ENCODE measurements at regions of chr10 and their contacts with region 1.

Region 1: DNA sequence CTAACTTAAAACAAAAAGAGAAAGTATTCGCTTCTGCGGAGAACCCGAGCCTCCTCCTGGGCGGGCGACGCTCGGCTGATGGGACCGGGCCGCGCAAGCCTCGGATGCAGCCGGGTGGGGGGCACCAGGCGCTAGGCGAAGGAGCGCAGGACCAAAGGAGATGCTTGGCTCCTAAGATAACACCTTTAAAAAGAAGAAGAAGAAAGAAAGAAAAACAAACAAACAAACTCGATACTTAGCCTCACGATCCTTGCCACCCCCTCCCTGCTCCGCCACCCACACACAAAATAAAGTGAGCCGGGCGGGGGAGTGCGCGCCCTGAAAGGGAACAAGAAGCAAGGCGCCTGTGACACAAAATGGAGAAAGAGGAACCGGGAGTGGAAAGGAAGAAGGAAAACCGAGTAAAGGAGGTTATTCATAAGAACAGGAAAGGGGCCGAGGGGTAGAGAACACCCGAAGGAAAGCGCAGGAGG is 34.0 kb upstream of the EBLN1 start:
- DNase-seq: peak; percentile 28 to 68 (median 64)
- H3K4me3 ChIP-seq: peak overlapping the region; percentile 56 to 96 (median 81)
- H3K27ac ChIP-seq: peak overlapping the region; percentile 97 to 100 (median 99)
- H3K27me3 ChIP-seq: no peaks in the 10 kb centered on the region
- CTCF ChIP-seq: peak in 1 of 56 donors; percentile 11

Region 2: DNA sequence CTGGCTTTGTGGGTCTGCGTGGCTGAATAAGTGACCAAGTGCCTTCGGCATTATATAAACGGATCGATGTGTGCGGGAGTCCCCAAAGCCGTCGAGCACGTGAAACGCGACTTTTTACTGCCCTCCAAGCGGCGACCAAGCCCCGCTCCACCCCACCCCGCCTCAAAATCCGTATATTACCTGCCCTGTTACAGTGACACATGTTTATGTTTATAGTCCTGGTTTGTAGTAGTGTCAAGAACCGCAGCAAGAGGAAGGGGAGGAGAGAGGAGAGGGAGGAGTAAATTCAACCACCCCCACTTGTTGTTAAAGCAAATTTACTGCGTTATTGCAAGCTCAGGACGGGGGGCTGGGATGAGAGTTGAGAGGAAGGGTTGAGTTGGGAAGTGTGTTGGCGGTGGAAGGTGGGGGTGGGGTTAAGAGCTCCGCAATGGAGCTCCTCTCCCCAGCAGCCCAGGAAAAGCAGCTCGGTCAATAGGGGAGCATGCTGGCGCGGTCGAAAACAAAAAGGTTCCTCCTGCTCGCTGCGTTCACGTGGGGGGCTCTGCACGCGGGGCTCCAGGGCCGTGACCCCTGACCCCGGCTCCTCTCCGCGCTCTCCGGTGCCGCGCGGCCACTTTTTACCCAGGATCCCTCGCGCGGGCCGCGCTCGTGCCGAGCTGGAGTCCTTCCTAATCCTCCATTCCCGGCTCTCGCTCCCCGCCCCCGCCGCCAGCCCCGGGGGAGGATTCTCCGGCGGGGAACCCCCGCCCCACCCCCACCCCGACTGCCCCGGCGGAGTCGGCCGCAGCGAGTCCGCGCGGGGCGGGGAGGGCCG is 726.2 kb before region 1 on chr10 and contains the start of gene SKIDA1:
- intact Hi-C with region 1: loop called in 1 of 2 experiments (anchors 2 kb)
- DNase-seq: peak in 9 of 10 donors; percentile 53 to 86 (median 70)
- H3K4me3 ChIP-seq: peak within 1 kb of the TSS; percentile 53 to 89 (median 77)
- H3K27ac ChIP-seq: peak within 1 kb of the TSS; percentile 90 to 100 (median 99)
- H3K27me3 ChIP-seq: no peaks in the 10 kb centered on the region
- CTCF ChIP-seq: peak in 11 of 56 donors; percentile 2 to 32 (median 14)
- total RNA-seq, gene SKIDA1: 2.0 to 8.9 (median 4.4) TPM

Region 3: DNA sequence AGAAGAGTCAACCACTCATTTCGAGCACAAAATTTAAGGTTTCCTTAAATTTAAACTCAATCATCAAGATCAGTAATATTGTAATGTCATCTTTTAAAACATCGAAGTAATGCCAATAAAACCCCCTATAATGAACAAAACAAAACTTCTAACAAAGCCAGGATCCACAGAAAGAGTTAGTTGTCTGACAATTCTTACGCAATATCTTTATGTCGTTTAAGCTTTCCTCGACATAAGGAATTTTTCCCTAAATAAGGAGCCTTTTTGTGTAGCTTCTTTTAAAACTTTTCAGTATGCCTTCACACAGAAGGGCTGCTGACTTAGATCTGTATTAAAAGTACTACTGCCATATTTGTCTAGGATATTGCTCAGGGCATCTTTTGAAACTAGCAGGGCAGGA is 41.5 kb before region 1 on chr10:
- intact Hi-C with region 1: no loop called
- DNase-seq: no peak
- H3K4me3 ChIP-seq: no peak overlapping the region
- H3K27ac ChIP-seq: no peak overlapping the region
- H3K27me3 ChIP-seq: peaks cover 0 to 4% (median 0%) of the 10 kb centered on the region in 45 donors
- CTCF ChIP-seq: no peak

Region 4: GRCh38 chr10:22228943-22229801 is 22.6 kb before region 1 on chr10:
- intact Hi-C with region 1: loop called (anchors 1 kb)
- DNase-seq: peak; percentile 76 to 91 (median 84)
- H3K4me3 ChIP-seq: peak overlapping the region; percentile 55 to 93 (median 78)
- H3K27ac ChIP-seq: peak overlapping the region; percentile 73 to 100 (median 98)
- H3K27me3 ChIP-seq: no peaks in the 10 kb centered on the region
- CTCF ChIP-seq: peak in 15 of 56 donors; percentile 4 to 34 (median 15)

Measured in dorsolateral prefrontal cortex (tissue), 120 donors.